ENCODE measurements at regions of chr9 and their contacts with region 1.

Region 1: GRCh38 chr9:69611221-69611620 is 61.0 kb downstream of the APBA1 start:
- DNase-seq: no peak
- H3K4me3 ChIP-seq: no peak overlapping the region
- H3K27ac ChIP-seq: no peak overlapping the region
- H3K4me1 ChIP-seq: no peaks in the 10 kb centered on the region
- H3K27me3 ChIP-seq: no peaks in the 10 kb centered on the region
- CTCF ChIP-seq: no peak
- POLR2A ChIP-seq: no peak

Region 2: GRCh38 chr9:70510157-70510770 is 899.0 kb after region 1 on chr9:
- intact Hi-C with region 1: no loop called
- DNase-seq: no peak
- H3K4me3 ChIP-seq: no peak overlapping the region
- H3K27ac ChIP-seq: no peak overlapping the region
- H3K4me1 ChIP-seq: peaks cover 19% of the 10 kb centered on the region
- H3K27me3 ChIP-seq: no peaks in the 10 kb centered on the region
- CTCF ChIP-seq: peak in 1 of 3 experiments; percentile 27
- POLR2A ChIP-seq: no peak

Region 3: GRCh38 chr9:70987986-70988385 is 1376.8 kb after region 1 on chr9:
- intact Hi-C with region 1: loop called (anchors 10 kb)
- DNase-seq: no peak
- H3K4me3 ChIP-seq: no peak overlapping the region
- H3K27ac ChIP-seq: no peak overlapping the region
- H3K4me1 ChIP-seq: no peaks in the 10 kb centered on the region
- H3K27me3 ChIP-seq: no peaks in the 10 kb centered on the region
- CTCF ChIP-seq: no peak
- POLR2A ChIP-seq: no peak